Dendritic cell treated with granulocyte-macrophage colony-stimulating factor and Interleukin-4, amounts not matched to agents 40 ng/mL and 50 ng/mL, for 4 days (primary cell): ENCODE measurements at regions of chr7 and their contacts with region 1.

Region 1: GRCh38 chr7:41861642-41862041 is 158.8 kb upstream of the INHBA start:
- H3K4me3 Mint-ChIP-seq: no peak overlapping the region
- H3K27ac Mint-ChIP-seq: no peak overlapping the region
- H3K4me1 Mint-ChIP-seq: peaks cover 15% of the 10 kb centered on the region
- H3K27me3 Mint-ChIP-seq: no peaks in the 10 kb centered on the region

Region 2: GRCh38 chr7:41847151-41847550 is 14.5 kb before region 1 on chr7:
- intact Hi-C with region 1: loop called (anchors 1 kb)
- H3K4me3 Mint-ChIP-seq: no peak overlapping the region
- H3K27ac Mint-ChIP-seq: peak overlapping the region; percentile 21
- H3K4me1 Mint-ChIP-seq: peaks cover 12% of the 10 kb centered on the region
- H3K27me3 Mint-ChIP-seq: no peaks in the 10 kb centered on the region